Activated naive CD4-positive, alpha-beta T cell treated with anti-CD3 and anti-CD28 coated beads for 36 hours (primary cell): ENCODE measurements at regions of chrX and their contacts with region 1.

Region 1: DNA sequence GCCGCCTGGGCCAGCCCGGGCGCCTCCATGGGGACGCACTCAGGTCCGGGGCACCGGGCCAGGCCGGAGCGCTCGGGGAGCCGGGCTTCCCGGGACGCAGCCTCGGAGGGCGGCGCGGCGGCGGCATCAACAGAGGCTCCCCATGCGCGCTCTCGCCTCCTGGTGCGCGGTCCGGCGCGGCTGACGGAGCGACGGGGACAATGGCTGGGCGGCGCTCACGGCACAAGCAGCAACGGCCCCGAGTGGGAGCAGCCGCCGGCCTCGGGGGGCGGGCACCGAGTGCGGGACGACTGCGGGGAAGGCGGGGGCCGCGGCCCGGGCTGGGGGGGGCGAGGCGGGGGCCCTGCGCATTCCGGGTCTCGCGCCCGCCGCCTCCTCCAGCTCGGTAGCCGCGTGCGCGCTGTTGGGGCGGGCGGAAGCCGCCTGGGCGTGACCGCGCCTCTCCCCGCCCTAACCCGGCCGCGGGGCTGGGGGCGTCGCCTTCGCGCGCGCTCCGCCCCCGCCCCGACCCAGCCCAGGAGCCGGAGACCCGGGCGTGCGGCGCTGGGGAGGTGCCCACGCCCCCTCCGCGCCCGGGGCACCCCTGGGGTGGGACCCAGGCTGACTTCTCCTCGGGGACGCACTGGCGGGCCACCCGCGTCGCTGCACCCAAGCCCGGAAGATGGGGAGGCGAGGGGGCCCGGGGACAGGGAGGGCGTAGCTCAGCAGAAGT is at the start of gene PRKX:
- DNase-seq: peak; percentile 54
- H3K4me3 Mint-ChIP-seq: peak within 1 kb of the TSS; percentile 88
- H3K27ac Mint-ChIP-seq: no peak within 1 kb of the TSS
- H3K4me1 Mint-ChIP-seq: peaks cover 20% of the 10 kb centered on the region
- H3K27me3 Mint-ChIP-seq: no peaks in the 10 kb centered on the region
- total RNA-seq, gene PRKX: 57.0 to 57.6 TPM

Region 2: GRCh38 chrX:2690856-2691542 is 1022.4 kb before region 1 on chrX and contains the start of gene CD99:
- CTCF ChIA-PET with region 1: no interaction called
- intact Hi-C with region 1: loop called (anchors 10 kb)
- DNase-seq: peak; percentile 87
- H3K4me3 Mint-ChIP-seq: peak within 1 kb of the TSS; percentile 99
- H3K27ac Mint-ChIP-seq: peak within 1 kb of the TSS; percentile 99
- H3K4me1 Mint-ChIP-seq: peaks cover 28% of the 10 kb centered on the region
- H3K27me3 Mint-ChIP-seq: no peaks in the 10 kb centered on the region
- total RNA-seq, gene CD99: 205 to 215 TPM

Region 3: DNA sequence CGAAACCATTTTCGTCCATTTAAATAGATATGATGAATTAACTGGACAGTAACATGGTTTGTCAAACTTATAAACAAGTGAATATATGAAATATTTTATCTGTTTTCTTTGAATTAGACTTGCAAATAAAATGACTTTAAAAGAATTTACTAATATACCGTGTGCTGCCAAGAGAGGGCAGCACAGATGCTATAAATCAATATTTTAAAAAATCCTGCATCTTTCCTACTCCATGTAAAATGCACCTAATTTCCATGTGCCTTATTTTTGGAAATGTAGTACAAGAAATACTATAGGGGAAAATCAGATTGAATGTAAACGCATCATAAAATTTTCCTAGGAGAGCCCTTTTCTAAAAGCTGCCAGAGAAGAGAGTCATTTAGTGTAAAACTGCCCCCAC is 62.1 kb before region 1 on chrX:
- CTCF ChIA-PET with region 1: interaction called, 3 read pairs
- intact Hi-C with region 1: loop called (anchors 2 kb)
- DNase-seq: no peak
- H3K4me3 Mint-ChIP-seq: no peak overlapping the region
- H3K27ac Mint-ChIP-seq: no peak overlapping the region
- H3K4me1 Mint-ChIP-seq: no peaks in the 10 kb centered on the region
- H3K27me3 Mint-ChIP-seq: no peaks in the 10 kb centered on the region

Region 4: GRCh38 chrX:3738509-3738908 is 25.1 kb after region 1 on chrX:
- CTCF ChIA-PET with region 1: no interaction called
- intact Hi-C with region 1: loop called (anchors 2 kb)
- DNase-seq: peak; percentile 13
- H3K4me3 Mint-ChIP-seq: no peak overlapping the region
- H3K27ac Mint-ChIP-seq: peak overlapping the region; percentile 81
- H3K4me1 Mint-ChIP-seq: peaks cover 14% of the 10 kb centered on the region
- H3K27me3 Mint-ChIP-seq: no peaks in the 10 kb centered on the region

Region 5: DNA sequence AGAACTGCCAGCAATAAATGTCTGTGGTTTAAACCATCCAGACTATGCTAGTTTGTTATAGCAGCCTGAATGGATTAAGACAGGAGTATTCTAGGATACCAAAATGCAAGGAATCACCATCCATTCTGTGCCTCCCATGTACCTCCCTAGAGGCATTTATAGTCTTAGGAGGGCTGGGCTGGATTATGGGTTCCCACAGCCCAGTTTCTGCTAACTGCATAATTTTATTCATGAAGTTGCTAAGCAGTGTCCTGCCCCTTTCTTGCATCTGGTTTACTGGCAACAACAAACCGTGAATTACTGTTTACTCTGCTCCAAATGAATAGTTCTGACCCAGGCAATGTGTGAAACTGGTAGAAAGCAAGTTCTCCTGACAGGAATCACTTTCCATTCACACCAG is 67.2 kb after region 1 on chrX:
- CTCF ChIA-PET with region 1: no interaction called
- intact Hi-C with region 1: loop called (anchors 5 kb)
- DNase-seq: no peak
- H3K4me3 Mint-ChIP-seq: no peak overlapping the region
- H3K27ac Mint-ChIP-seq: no peak overlapping the region
- H3K4me1 Mint-ChIP-seq: no peaks in the 10 kb centered on the region
- H3K27me3 Mint-ChIP-seq: no peaks in the 10 kb centered on the region

Region 6: DNA sequence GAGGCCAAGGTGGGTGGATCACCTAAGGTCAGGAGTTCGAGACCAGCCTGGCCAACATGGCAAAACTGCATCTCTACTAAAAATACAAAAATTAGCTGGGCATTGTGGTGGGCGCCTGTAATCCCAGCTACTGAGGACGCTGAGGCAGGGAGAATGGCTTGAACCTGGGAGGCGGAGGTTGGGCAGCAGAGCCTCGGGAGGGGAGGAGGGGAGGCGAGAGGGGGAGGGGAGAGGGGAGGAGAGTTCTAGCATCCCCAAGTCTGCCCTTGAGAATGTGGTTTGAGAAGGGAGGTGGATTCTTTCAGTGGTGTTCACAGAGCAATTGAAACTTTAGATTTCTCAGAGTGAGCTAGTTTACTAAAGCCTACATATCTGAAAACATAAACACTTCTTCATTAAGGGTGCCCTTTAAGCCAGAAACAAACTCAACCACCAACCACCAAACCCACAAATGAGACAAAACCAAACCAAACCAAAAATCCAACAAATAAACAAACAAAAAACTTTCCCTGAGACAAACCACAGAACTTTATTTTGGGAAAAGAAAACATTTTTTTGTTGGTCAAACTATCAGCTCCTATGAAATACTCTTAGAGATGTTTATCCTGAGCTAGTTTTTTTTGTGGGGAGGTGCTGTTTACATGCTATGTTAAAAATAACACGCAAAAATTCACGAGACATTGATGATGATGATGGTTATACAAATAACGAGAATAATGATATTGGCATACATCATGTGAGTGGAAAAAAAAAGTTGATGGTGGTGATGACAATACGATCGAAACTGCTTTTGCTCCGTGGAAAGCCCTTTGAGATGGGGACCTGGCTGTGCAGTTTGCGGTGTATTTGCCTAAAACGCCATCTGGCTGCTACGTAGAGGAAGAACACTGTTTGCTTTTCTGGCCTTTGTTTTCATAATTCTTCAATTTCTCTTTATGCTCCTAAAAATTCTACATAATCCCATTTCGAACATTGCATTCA is 98.2 kb after region 1 on chrX:
- CTCF ChIA-PET with region 1: interaction called, 3 read pairs
- intact Hi-C with region 1: loop called (anchors 1 kb)
- DNase-seq: peak; percentile 54
- H3K4me3 Mint-ChIP-seq: peak overlapping the region; percentile 9
- H3K27ac Mint-ChIP-seq: no peak overlapping the region
- H3K4me1 Mint-ChIP-seq: peaks cover 11% of the 10 kb centered on the region
- H3K27me3 Mint-ChIP-seq: peaks cover 3% of the 10 kb centered on the region